AG04450 (cell line): ENCODE measurements at regions of chr10 and their contacts with region 1.

Region 1: GRCh38 chr10:13707156-13707881 is 120.6 kb downstream of the PRPF18 start:
- DNase-seq: peak; percentile 70
- H3K4me3 ChIP-seq: peak overlapping the region; percentile 79
- H3K27ac ChIP-seq: peak overlapping the region; percentile 75
- H3K27me3 ChIP-seq: no peaks in the 10 kb centered on the region
- CTCF ChIP-seq: 0 out of 2 replicates have a peak, but pooled peaks have one; percentile 22

Region 2: GRCh38 chr10:13684252-13684791 is 23.0 kb before region 1 on chr10:
- CTCF ChIA-PET with region 1: no interaction called
- POLR2A ChIA-PET with region 1: no interaction called
- DNase-seq: peak; percentile 26
- H3K4me3 ChIP-seq: peak overlapping the region; percentile 5; the same call in 1 of the 2 replicates
- H3K27ac ChIP-seq: peak overlapping the region; percentile 81
- H3K27me3 ChIP-seq: no peaks in the 10 kb centered on the region
- CTCF ChIP-seq: no peak

Region 3: GRCh38 chr10:13717931-13718772 is 10.8 kb after region 1 on chr10:
- CTCF ChIA-PET with region 1: no interaction called
- POLR2A ChIA-PET with region 1: interaction called, 22 read pairs
- DNase-seq: peak; percentile 89
- H3K4me3 ChIP-seq: peak overlapping the region; percentile 43
- H3K27ac ChIP-seq: peak overlapping the region; percentile 89
- H3K27me3 ChIP-seq: no peaks in the 10 kb centered on the region
- CTCF ChIP-seq: no peak